Dendritic cell treated with granulocyte-macrophage colony-stimulating factor and Interleukin-4, amounts not matched to agents 40 ng/mL and 50 ng/mL, for 4 days (primary cell): ENCODE measurements at regions of chr2 and their contacts with region 1.

Region 1: GRCh38 chr2:166361351-166362153 is 14.2 kb downstream of the SCN9A start:
- H3K4me3 Mint-ChIP-seq: no peak overlapping the region
- H3K27ac Mint-ChIP-seq: peak overlapping the region; percentile 10
- H3K4me1 Mint-ChIP-seq: peaks cover 35% of the 10 kb centered on the region
- H3K27me3 Mint-ChIP-seq: no peaks in the 10 kb centered on the region

Region 2: DNA sequence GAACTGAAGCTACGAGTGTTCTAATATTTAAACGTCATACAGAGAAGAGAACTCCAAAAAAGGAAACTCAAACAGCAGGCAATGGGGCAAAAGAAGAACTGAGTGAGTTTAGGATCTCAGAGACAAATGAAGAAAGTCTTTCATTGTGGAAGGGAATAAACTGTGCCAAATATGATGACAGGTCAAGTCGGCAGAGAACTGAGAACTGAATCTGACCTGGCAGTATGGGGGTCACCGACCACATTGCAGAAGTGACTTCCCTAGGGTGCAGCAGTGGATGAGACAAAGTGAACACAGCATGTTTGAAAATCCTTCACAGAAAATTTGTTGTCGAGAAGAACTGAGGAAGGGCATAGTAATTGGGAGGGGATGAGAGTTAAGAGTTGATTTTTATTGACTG is 463.8 kb before region 1 on chr2:
- intact Hi-C with region 1: no loop called
- H3K4me3 Mint-ChIP-seq: peak overlapping the region; percentile 32
- H3K27ac Mint-ChIP-seq: peak overlapping the region; percentile 68
- H3K4me1 Mint-ChIP-seq: peaks cover 37% of the 10 kb centered on the region
- H3K27me3 Mint-ChIP-seq: no peaks in the 10 kb centered on the region

Region 3: GRCh38 chr2:166321076-166321475 is 40.5 kb before region 1 on chr2:
- intact Hi-C with region 1: no loop called
- H3K4me3 Mint-ChIP-seq: no peak overlapping the region
- H3K27ac Mint-ChIP-seq: no peak overlapping the region
- H3K4me1 Mint-ChIP-seq: no peaks in the 10 kb centered on the region
- H3K27me3 Mint-ChIP-seq: no peaks in the 10 kb centered on the region

Region 4: DNA sequence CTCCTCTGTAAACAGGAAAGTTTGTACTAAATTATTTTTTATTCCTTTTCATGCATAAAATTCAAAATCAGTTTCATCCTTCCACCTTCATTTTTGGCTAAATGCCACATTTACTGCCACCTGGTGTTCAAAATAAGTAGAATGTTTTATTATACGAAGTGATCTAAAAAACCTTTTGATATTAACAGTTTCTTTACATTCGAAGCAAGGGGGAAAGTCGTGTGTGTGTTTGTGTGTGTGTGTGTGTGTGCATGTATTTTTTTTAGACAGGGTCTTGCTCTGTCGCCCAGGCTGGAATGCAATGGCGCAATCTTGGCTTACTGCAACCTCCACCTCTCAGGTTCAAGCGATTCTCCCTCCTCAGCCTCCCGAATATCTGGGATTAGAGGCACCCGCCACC is 23.2 kb after region 1 on chr2:
- intact Hi-C with region 1: loop called (anchors 1 kb)
- H3K4me3 Mint-ChIP-seq: no peak overlapping the region
- H3K27ac Mint-ChIP-seq: no peak overlapping the region
- H3K4me1 Mint-ChIP-seq: peaks cover 20% of the 10 kb centered on the region
- H3K27me3 Mint-ChIP-seq: peaks cover 7% of the 10 kb centered on the region

Region 5: GRCh38 chr2:166417669-166418068 is 56.1 kb after region 1 on chr2:
- intact Hi-C with region 1: loop called (anchors 1 kb)
- H3K4me3 Mint-ChIP-seq: no peak overlapping the region
- H3K27ac Mint-ChIP-seq: no peak overlapping the region
- H3K4me1 Mint-ChIP-seq: peaks cover 10% of the 10 kb centered on the region
- H3K27me3 Mint-ChIP-seq: no peaks in the 10 kb centered on the region